IMR-90 (cell line): ENCODE measurements at regions of chr11 and their contacts with region 1.

Region 1: DNA sequence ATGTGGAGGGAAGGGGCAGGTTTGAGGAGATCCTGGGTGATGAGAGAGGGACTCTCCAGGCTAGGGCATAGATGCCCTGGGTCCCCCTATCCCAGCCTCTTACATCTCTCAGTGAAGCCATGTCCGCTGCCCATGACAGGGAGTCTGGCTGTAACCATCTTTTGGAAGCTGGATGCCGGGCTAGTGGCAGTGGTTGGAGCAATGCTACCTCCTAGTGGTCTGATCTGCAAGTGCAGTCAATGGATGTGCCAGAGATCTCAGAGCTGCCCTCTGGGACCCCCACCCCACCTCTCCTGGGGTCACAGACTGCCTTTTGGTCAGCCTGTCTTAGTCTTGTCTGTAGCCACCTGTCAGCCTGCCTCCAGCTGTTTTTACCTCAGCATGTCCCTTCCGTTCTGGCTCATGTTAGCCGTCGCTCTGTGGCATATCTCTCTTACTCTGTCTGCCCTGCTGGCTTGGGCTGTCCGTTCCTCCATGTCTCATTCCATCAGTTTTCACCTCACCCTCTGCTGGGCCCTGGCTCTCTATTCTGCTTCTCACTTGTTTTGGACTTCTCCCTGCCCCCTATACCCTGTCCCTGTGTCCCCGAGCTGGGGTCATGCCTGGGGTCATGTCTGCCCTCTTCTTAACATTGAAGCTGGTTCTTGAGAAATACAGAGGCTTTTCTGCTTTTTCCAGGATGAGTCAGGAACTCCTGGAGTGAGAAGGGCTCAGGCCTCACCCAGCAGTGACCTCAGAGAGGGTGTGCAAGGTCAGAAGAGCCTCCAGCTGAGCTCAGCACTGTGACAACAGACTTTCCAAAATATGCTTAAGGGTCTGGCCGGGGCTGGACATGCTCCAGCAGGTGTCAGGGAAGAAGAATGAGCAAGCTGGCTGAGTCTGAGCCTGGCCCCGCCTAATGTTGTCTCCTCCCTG is 52.0 kb upstream of the THY1 start:
- DNase-seq: peak; percentile 82
- ATAC-seq: peak; percentile 81
- H3K4me3 ChIP-seq: no peak overlapping the region
- H3K27ac ChIP-seq: peak overlapping the region; percentile 24; the same call in 1 of the 2 replicates
- H3K4me1 ChIP-seq: peaks cover 17% of the 10 kb centered on the region
- H3K27me3 ChIP-seq: peaks cover 12% of the 10 kb centered on the region; the same call in 1 of the 2 replicates
- CTCF ChIP-seq: peak; percentile 96
- POLR2A ChIP-seq: peak; percentile 51; the same call in 1 of the 2 replicates
- RAD21 ChIP-seq: peak; percentile 99

Region 2: DNA sequence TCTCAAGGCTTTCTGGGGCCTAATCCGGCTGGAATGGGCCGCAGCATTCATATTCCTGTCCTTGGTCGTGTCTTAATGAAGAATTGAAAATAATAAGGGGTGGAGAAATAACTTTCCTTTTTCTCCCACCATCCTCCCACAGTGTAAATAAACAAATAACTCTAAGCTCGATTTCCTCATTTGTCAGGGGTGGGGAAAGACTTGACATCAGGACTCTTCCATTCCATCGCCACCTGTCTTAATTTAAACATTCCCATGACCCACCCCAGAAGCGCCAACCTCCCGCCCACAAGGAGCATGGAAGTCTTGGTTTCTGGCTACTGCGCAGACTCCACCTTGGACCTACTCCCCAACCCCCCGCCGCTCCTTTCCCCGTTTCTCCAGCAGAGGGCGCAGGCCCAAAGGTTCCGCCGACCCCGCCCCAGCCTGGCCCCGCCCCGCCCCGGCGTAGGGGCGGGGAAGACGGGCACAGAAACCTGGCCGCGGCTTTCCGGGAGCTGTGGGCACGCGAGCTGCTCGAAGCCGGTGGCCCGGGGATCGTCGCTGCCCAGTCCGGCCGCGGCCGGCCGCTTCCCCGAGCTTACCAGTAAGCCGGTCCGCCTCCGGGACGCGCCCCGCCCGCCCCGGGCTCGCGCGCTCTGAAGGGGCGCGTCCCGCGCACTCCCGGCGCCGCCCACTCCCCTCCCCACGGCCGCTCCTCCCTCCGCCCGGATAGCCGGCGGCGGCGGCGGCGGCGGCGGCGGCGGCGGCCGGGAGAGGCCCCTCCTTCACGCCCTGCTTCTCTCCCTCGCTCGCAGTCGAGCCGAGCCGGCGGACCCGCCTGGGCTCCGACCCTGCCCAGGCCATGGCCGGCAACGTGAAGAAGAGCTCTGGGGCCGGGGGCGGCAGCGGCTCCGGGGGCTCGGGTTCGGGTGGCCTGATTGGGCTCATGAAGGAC is 269.1 kb before region 1 on chr11 and contains the start of gene CBL:
- CTCF ChIA-PET with region 1: interaction called, 3 read pairs
- POLR2A ChIA-PET with region 1: no interaction called
- dilution Hi-C with region 1: no loop called
- in situ Hi-C with region 1: no loop called
- intact Hi-C with region 1: loop called (anchors 1 kb)
- DNase-seq: peak; percentile 84
- ATAC-seq: peak; percentile 93
- H3K4me3 ChIP-seq: peak within 1 kb of the TSS; percentile 100
- H3K27ac ChIP-seq: peak within 1 kb of the TSS; percentile 99
- H3K4me1 ChIP-seq: peaks cover 5% of the 10 kb centered on the region
- H3K27me3 ChIP-seq: no peaks in the 10 kb centered on the region
- CTCF ChIP-seq: peak; percentile 86
- POLR2A ChIP-seq: peak; percentile 59; the same call in 1 of the 2 replicates
- RAD21 ChIP-seq: peak; percentile 51
- total RNA-seq, gene CBL: 6.1 and 7.2 TPM in 2 replicates

Region 3: DNA sequence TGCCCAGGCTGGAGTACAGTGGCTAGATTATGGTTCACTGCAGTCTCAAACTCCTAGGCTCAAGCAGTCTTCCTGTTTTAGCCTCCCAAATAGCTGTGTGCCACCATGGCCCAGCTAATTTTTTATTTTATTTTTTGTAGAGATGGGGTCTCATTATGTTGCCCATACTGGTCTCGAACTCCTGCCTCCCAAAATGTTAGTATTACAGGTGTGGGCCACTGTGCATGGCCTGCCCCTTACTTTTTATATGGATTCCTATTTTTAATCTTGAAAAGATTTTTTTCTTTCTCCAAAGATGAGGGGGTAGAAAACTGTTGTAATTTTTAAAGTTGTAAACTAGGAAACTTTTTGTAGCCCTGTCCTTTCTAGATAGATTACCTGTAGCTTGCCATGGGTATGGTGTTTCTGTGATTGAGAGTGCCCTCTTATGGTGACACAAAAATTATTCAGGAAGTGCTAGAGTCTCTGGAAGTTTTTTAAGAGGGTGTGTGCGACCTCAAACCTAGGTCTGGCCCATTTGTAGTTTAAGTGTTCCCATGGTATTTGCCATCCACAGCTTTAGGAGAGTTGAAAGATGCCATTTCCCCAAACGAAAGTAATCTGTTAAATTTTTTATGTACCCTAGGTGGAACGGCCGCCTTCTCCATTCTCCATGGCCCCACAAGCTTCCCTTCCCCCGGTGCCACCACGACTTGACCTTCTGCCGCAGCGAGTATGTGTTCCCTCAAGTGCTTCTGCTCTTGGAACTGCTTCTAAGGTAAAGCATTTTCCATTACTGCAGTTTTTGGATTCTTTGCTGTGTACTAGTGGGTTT is 190.4 kb before region 1 on chr11:
- CTCF ChIA-PET with region 1: no interaction called
- POLR2A ChIA-PET with region 1: no interaction called
- dilution Hi-C with region 1: no loop called
- in situ Hi-C with region 1: no loop called
- intact Hi-C with region 1: no loop called
- DNase-seq: peak; percentile 47
- ATAC-seq: peak; percentile 80
- H3K4me3 ChIP-seq: no peak overlapping the region
- H3K27ac ChIP-seq: no peak overlapping the region
- H3K4me1 ChIP-seq: no peaks in the 10 kb centered on the region
- H3K27me3 ChIP-seq: no peaks in the 10 kb centered on the region
- CTCF ChIP-seq: peak; percentile 54
- POLR2A ChIP-seq: no peak
- RAD21 ChIP-seq: peak; percentile 61

Region 4: DNA sequence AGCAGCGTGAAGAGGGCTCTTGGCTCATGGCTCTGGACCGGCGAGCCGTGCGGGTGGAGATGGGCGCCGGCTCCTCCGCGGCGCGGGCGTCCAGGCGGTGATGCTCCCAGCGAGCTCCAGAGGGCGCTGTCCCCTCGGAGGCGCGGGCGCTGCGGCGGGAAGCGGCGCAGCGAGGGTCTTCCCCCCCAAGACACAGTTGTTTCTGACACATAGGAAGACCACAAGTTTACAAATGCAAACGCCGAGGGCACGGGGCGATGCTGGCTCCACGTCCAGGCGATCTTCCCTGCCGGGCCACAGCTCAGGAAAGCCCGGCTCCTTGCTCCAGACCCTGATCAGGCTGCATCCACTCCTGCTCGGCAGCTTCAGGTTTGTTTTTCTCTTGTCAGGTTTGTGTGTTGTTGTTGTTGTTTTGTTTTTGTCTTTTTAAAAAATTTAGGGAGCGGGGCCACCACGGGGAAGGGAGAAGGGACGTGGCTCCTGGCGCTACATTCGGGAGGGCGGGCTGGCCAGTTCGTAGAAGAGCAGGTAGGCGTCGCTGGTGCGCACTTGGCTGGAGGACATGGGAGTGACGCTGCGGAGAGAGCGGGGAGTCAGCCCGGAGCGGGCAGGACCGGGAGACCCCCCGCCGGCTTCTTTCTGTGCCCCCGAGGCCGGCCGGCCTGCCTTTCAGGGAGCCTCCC is 118.4 kb before region 1 on chr11:
- CTCF ChIA-PET with region 1: interaction called, 27 read pairs
- POLR2A ChIA-PET with region 1: interaction called, 3 read pairs
- dilution Hi-C with region 1: no loop called
- in situ Hi-C with region 1: loop called (anchors 5 kb)
- intact Hi-C with region 1: loop called (anchors 1 kb)
- DNase-seq: peak; percentile 66
- ATAC-seq: peak; percentile 87
- H3K4me3 ChIP-seq: peak overlapping the region; percentile 46
- H3K27ac ChIP-seq: no peak overlapping the region
- H3K4me1 ChIP-seq: peaks cover 3% of the 10 kb centered on the region
- H3K27me3 ChIP-seq: 0 out of 2 replicates have a peak, but pooled peaks cover 4% of the 10 kb centered on the region
- CTCF ChIP-seq: peak; percentile 90
- POLR2A ChIP-seq: no peak
- RAD21 ChIP-seq: peak; percentile 79

Region 5: GRCh38 chr11:119381181-119381988 is 93.6 kb before region 1 on chr11 and contains the start of gene USP2:
- CTCF ChIA-PET with region 1: interaction called, 23 read pairs
- POLR2A ChIA-PET with region 1: no interaction called
- dilution Hi-C with region 1: no loop called
- in situ Hi-C with region 1: no loop called
- intact Hi-C with region 1: loop called (anchors 1 kb)
- DNase-seq: peak; percentile 96
- ATAC-seq: peak; percentile 99
- H3K4me3 ChIP-seq: peak within 1 kb of the TSS; percentile 50
- H3K27ac ChIP-seq: no peak within 1 kb of the TSS; the same call in 1 of the 2 replicates
- H3K4me1 ChIP-seq: peaks cover 10% of the 10 kb centered on the region
- H3K27me3 ChIP-seq: peaks cover 20% of the 10 kb centered on the region
- CTCF ChIP-seq: peak; percentile 96
- POLR2A ChIP-seq: no peak; the same call in 1 of the 2 replicates
- RAD21 ChIP-seq: peak; percentile 72
- total RNA-seq, gene USP2: under 0.01 and 0.18 TPM in 2 replicates

Region 6: GRCh38 chr11:119432484-119433357 is 42.2 kb before region 1 on chr11:
- CTCF ChIA-PET with region 1: interaction called, 7 read pairs
- POLR2A ChIA-PET with region 1: no interaction called
- dilution Hi-C with region 1: no loop called
- in situ Hi-C with region 1: loop called (anchors 5 kb)
- intact Hi-C with region 1: no loop called
- DNase-seq: peak; percentile 77
- ATAC-seq: peak; percentile 81
- H3K4me3 ChIP-seq: peak overlapping the region; percentile 14; the same call in 1 of the 2 replicates
- H3K27ac ChIP-seq: peak overlapping the region; percentile 71
- H3K4me1 ChIP-seq: peaks cover 19% of the 10 kb centered on the region
- H3K27me3 ChIP-seq: no peaks in the 10 kb centered on the region
- CTCF ChIP-seq: no peak
- POLR2A ChIP-seq: no peak
- RAD21 ChIP-seq: no peak